ENCODE measurements at regions of chr3 and their contacts with region 1.

Region 1: DNA sequence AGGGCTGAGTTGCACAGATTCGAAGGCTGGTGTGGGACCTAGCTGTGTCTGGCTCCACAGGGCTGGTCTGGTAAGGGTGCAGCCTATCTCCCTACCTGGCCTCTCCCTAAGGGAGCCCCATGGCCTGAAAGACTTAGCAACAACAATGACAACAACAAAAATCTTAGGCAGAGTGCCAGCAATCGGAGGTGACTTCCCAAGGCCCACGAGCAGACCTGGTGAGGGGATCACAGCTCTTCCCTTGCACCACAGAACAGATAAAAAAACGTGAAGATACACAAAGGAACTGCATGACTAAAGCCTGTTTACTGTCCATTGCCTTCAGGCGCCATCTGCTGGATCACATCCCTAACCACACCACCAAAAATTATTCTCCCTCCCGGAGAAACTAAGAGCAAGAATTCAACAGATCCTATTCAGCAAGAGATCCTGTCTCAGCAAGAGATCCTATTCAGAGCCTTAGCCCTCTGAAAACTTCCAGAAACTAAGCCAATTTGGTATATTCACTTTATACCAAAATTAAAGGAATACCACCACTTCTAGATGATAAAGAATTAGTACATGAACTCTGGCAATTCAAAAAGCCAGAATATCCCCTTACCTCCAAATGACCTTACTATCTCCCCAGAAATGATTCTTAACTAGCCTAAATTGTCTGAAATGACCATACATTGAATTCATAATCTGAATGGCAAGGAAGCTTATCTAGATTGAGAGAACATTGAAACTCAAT is 24.1 kb upstream of the OR5K4 start:
- DNase-seq: peak; percentile 86
- H3K4me3 Mint-ChIP-seq: no peak overlapping the region
- H3K27ac Mint-ChIP-seq: no peak overlapping the region
- H3K4me1 Mint-ChIP-seq: peaks cover 18% of the 10 kb centered on the region
- H3K27me3 Mint-ChIP-seq: peaks cover 48% of the 10 kb centered on the region

Region 2: GRCh38 chr3:97793420-97794019 is 536.0 kb before region 1 on chr3:
- intact Hi-C with region 1: loop called (anchors 10 kb)
- DNase-seq: peak; percentile 80
- H3K4me3 Mint-ChIP-seq: no peak overlapping the region
- H3K27ac Mint-ChIP-seq: no peak overlapping the region
- H3K4me1 Mint-ChIP-seq: no peaks in the 10 kb centered on the region
- H3K27me3 Mint-ChIP-seq: no peaks in the 10 kb centered on the region

Region 3: GRCh38 chr3:98188545-98188944 is 141.0 kb before region 1 on chr3:
- intact Hi-C with region 1: loop called (anchors 5 kb)
- DNase-seq: peak; percentile 64
- H3K4me3 Mint-ChIP-seq: no peak overlapping the region
- H3K27ac Mint-ChIP-seq: no peak overlapping the region
- H3K4me1 Mint-ChIP-seq: peaks cover 3% of the 10 kb centered on the region
- H3K27me3 Mint-ChIP-seq: peaks cover 17% of the 10 kb centered on the region

Region 4: DNA sequence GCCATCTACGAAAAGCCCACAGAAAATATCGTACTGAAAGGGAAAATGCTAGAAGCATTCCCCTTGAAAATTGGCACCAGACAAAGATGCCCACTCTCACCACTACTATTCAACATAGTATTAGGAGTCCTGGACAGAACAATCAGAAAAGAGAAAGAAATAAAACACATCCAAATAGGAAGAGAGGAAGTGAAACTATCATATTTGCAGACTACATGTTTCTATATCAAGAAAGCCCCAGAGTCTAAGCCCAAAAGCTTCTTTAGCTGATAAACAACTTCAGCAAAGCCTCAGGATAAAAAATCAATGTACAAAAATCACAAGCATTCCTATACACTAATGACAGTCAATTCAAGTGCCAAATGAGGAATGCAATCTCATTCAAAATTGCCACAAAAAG is 76.5 kb after region 1 on chr3:
- intact Hi-C with region 1: no loop called
- DNase-seq: no peak
- H3K4me3 Mint-ChIP-seq: no peak overlapping the region
- H3K27ac Mint-ChIP-seq: no peak overlapping the region
- H3K4me1 Mint-ChIP-seq: peaks cover 2% of the 10 kb centered on the region
- H3K27me3 Mint-ChIP-seq: peaks cover 6% of the 10 kb centered on the region

Region 5: GRCh38 chr3:98513091-98513511 is 183.5 kb after region 1 on chr3:
- intact Hi-C with region 1: no loop called
- DNase-seq: no peak
- H3K4me3 Mint-ChIP-seq: no peak overlapping the region
- H3K27ac Mint-ChIP-seq: peak overlapping the region; percentile 7
- H3K4me1 Mint-ChIP-seq: peaks cover 47% of the 10 kb centered on the region
- H3K27me3 Mint-ChIP-seq: no peaks in the 10 kb centered on the region

Region 6: DNA sequence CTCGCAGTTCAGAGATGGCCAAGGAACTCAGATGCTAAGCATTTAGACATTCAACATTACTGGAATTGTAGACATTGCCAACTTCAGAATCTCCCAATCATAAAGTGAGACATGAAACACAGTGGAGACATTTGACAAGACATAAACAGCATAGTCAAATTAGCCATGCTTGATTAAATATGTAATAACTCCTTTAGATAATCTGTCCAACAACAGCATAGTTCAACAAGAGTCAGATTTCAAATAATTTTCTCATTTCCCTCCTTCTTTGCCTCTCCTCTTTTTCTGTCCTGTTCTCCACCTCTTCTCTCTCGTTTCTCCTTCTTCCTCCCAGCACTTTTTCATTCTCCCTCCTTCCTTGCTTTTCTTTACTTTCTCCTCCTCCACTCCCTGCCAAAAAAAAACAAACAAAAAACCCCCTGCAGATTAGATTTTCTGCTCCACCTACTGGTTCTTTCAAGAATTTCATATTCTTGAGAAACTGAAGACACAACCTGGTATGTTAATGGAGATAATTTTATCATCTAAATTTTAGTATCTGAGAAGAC is 243.7 kb after region 1 on chr3:
- intact Hi-C with region 1: loop called (anchors 5 kb)
- DNase-seq: peak; percentile 65
- H3K4me3 Mint-ChIP-seq: peak overlapping the region; percentile 59
- H3K27ac Mint-ChIP-seq: peak overlapping the region; percentile 75
- H3K4me1 Mint-ChIP-seq: peaks cover 49% of the 10 kb centered on the region
- H3K27me3 Mint-ChIP-seq: no peaks in the 10 kb centered on the region